Ascending aorta (tissue), 2 donors: ENCODE measurements at regions of chr9 and their contacts with region 1.

Region 1: GRCh38 chr9:20356403-20357035 is 265.8 kb downstream of the MLLT3 start:
- DNase-seq: peak in 1 of 2 donors; percentile 77
- H3K4me3 ChIP-seq: peak overlapping the region; percentile 28 to 43
- H3K27ac ChIP-seq: peak overlapping the region; percentile 35 to 49
- H3K4me1 ChIP-seq: peaks cover 0 to 15% of the 10 kb centered on the region in 2 donors
- H3K27me3 ChIP-seq: no peaks in the 10 kb centered on the region
- CTCF ChIP-seq: peak in 2 of 3 experiments; percentile 55 to 72

Region 2: DNA sequence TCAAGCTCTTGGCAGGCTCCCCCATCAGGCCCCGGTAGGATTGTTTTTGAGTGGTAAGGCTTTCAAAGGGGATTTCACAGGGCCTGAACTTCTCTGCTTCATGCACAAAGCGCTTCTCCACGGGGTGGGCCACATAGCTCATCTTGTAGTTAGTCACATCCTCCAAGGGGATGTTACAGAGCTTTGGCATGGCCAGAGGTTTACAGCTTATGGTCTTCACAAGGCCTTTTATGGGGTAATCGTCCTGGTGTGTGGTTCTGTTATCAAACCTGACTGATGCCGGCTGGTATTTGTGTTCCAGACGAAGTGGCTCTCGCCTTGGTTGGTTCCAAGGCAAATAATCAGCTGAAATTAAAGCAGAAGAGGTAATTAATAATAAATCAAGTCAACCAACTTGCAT is 1427.8 kb before region 1 on chr9:
- intact Hi-C with region 1: no loop called
- DNase-seq: no peak
- H3K4me3 ChIP-seq: no peak overlapping the region
- H3K27ac ChIP-seq: no peak overlapping the region
- H3K4me1 ChIP-seq: no peaks in the 10 kb centered on the region
- H3K27me3 ChIP-seq: no peaks in the 10 kb centered on the region
- CTCF ChIP-seq: no peak

Region 3: GRCh38 chr9:19925817-19926503 is 430.6 kb before region 1 on chr9:
- intact Hi-C with region 1: loop called (anchors 10 kb)
- DNase-seq: peak in 1 of 2 donors; percentile 74
- H3K4me3 ChIP-seq: peak overlapping the region; percentile 42 to 54
- H3K27ac ChIP-seq: no peak overlapping the region
- H3K4me1 ChIP-seq: no peaks in the 10 kb centered on the region
- H3K27me3 ChIP-seq: no peaks in the 10 kb centered on the region
- CTCF ChIP-seq: peak; percentile 76 to 97 (median 90)

Region 4: DNA sequence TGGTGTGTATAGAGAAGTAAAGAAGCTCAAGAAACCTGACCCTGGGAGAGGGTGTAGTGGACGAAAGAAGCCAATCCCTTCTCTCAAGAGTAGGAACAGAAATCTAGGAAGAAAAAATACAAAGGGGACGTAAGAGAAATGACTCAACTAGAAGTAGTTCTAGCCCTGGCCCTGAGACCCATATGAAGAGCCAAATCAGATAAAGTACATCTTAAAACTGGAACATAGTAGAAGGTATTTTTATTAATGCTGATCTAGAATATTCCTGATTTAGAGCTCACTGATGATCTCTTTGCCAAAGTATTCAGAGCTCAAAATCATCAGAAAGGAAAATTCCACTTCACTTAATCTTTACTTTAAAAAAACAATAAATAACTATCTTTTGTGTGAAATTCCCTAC is 81.0 kb after region 1 on chr9:
- intact Hi-C with region 1: loop called (anchors 10 kb)
- DNase-seq: no peak
- H3K4me3 ChIP-seq: no peak overlapping the region
- H3K27ac ChIP-seq: peak overlapping the region in 1 of 2 donors; percentile 30
- H3K4me1 ChIP-seq: peaks cover 0 to 5% of the 10 kb centered on the region in 2 donors
- H3K27me3 ChIP-seq: no peaks in the 10 kb centered on the region
- CTCF ChIP-seq: no peak

Region 5: DNA sequence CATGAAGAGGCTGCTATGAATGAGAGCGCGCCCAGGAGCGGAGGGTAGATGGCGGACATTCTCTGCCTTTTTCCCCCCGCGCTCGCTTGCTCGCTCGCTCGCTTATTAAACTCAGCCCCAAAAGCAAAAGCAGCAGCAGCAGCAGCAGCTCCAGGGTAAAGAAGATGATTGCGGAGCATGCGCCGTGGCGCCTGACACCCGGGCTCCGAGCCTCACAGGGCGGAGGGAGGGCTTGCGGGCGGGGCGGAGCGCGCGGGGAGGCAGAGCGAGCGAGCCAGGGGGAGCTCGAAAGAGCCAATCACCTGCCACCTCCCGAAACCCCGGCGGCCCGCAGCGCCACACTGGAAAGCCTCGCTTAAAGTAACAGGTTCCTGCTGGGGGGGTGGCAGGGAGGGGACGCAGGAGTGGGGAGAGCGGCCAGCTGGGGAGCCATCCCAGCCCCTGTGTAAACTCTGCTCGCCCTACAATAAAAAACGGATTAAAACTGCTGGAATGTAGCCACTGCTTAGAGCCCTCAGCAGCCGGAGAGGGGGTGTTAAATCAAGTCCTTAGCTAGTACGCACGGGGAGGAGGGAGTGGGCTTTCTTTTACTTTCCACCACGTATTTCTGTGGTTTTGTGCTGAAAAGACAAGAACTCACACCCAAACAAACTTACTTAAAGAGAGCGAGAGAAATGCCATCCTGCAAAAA is 266.0 kb after region 1 on chr9 and contains the start of gene MLLT3:
- intact Hi-C with region 1: loop called (anchors 5 kb)
- DNase-seq: peak; percentile 82 to 98
- H3K4me3 ChIP-seq: peak within 1 kb of the TSS; percentile 89
- H3K27ac ChIP-seq: peak within 1 kb of the TSS; percentile 69 to 91
- H3K4me1 ChIP-seq: peaks cover 3 to 8% of the 10 kb centered on the region in 2 donors
- H3K27me3 ChIP-seq: no peaks in the 10 kb centered on the region
- CTCF ChIP-seq: no peak
- total RNA-seq, gene MLLT3: 16.8 TPM

Region 6: GRCh38 chr9:20684035-20684872 is 327.7 kb after region 1 on chr9 and contains the start of gene FOCAD:
- intact Hi-C with region 1: loop called (anchors 5 kb)
- DNase-seq: peak; percentile 87 to 98
- H3K4me3 ChIP-seq: peak within 1 kb of the TSS; percentile 89 to 100
- H3K27ac ChIP-seq: peak within 1 kb of the TSS; percentile 94 to 98
- H3K4me1 ChIP-seq: peaks cover 0 to 13% of the 10 kb centered on the region in 2 donors
- H3K27me3 ChIP-seq: no peaks in the 10 kb centered on the region
- CTCF ChIP-seq: no peak
- total RNA-seq, gene FOCAD: 64.3 TPM

Region 7: GRCh38 chr9:20788526-20789451 is 432.3 kb after region 1 on chr9:
- intact Hi-C with region 1: no loop called
- DNase-seq: no peak
- H3K4me3 ChIP-seq: no peak overlapping the region
- H3K27ac ChIP-seq: no peak overlapping the region
- H3K4me1 ChIP-seq: no peaks in the 10 kb centered on the region
- H3K27me3 ChIP-seq: no peaks in the 10 kb centered on the region
- CTCF ChIP-seq: no peak

Region 8: DNA sequence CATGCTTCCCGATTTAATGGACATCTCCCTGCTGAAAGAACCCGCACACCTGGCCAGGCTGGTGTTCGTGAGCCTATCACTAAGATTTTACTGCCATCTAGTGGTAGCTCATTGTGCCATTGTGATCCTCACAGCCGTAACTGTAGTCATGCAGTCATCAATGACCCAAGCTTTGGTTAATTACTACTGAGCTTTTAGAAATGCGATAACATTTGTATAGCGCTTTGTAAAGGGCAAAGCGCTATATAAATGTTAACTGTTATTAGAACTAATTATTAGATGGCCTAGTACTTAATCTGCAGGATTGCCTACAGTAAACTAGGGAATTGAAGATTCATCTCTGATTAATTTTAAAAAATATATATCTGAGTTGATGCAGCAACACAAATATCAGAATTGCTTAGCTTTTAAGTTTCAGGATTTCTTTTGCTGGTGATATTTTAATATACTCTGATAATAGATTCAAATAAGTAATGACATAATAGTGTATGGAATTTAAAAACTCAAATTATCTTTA is 584.7 kb after region 1 on chr9:
- intact Hi-C with region 1: loop called (anchors 2 kb)
- DNase-seq: peak in 1 of 2 donors; percentile 68
- H3K4me3 ChIP-seq: no peak overlapping the region
- H3K27ac ChIP-seq: no peak overlapping the region
- H3K4me1 ChIP-seq: no peaks in the 10 kb centered on the region
- H3K27me3 ChIP-seq: no peaks in the 10 kb centered on the region
- CTCF ChIP-seq: peak; percentile 48 to 89 (median 76)

Region 9: DNA sequence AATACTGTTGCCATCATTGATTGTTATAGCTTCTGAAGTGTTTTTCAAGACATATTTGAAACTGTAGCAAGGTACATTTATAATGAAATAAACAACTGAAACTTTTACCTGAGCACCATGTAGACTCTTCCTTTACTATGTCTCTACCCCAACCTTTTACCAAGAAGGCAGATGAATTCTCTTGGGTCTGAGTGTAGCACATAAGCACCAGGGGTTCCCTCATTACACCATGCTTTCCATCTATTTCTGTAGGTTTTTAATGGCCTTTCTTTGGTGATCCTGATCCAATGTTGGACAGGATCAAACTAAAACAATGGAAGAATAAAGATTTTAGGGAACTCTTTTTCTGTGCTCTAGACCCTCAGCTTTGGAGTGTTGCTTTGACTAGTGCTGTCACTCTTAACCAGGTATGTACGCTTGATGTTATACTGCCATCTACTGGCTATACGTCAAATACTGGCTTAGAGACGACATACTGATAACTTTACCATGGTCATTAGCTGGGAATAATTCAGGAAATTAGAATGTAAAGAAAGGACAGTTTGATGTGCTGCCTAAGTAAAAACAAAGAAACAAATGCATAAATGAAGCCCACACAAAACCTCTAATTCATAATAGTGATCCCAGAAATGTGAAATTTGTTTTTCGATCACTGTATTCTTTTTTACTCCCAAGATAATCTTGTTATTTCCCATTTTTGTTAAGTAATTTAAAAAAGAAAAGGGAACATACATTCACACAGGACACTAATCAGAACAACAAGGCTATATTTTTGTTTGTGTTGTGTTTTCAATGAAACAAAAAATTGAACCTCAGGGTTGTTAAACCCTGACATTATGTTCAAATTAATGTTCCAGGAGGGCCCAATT is 754.4 kb after region 1 on chr9:
- intact Hi-C with region 1: loop called (anchors 5 kb)
- DNase-seq: no peak
- H3K4me3 ChIP-seq: no peak overlapping the region
- H3K27ac ChIP-seq: no peak overlapping the region
- H3K4me1 ChIP-seq: no peaks in the 10 kb centered on the region
- H3K27me3 ChIP-seq: no peaks in the 10 kb centered on the region
- CTCF ChIP-seq: peak; percentile 68 to 85 (median 80)